ENCODE measurements at regions of chr1 and their contacts with region 1.

Region 1: DNA sequence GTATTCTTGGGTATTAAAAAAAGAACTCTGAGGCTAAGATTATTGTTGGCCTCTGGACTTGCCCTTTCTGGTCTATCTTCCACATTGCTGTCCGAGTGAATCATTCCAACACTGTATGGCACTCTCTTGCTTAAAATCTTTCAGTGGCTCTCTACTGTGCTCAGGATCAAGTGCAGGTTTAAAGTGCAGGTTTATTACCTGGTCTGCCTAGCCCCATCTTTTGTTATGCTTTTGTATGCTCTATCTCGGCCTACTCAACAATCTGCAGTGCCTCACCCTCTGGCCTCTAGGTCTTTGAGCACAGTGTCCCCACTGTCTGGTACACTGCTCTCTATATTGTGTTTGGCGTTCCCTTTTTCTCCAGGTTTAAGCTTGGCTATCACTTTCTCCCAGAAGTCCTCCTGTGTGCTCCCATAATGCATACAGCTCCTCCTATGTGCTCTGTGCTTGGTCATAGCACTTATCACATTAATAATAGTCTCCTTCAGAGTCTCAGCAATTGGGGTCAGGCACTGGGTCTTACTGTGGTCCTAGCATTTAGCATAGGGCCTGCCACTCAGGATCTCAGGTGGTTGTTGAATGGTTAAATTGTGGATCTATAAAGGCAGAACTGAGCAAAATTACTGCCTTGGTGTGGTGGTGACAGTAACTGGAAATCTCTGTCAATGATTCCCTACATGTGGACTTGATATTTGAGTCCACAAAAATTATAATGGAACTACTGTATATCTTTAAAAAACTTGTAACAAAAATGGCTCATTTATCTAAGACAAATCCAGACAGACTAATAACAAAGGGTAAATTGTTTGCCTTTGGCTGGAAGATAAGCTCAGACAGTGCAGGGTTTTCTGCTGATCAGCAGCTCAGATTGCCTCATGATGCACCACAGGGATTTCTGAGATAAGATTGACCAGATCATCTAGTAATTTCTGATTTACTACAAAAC is 10.6 kb upstream of the LDLRAD1 start:
- DNase-seq: no peak
- H3K4me3 ChIP-seq: no peak overlapping the region
- H3K27ac ChIP-seq: no peak overlapping the region
- H3K4me1 ChIP-seq: no peaks in the 10 kb centered on the region
- H3K27me3 ChIP-seq: no peaks in the 10 kb centered on the region
- CTCF ChIP-seq: no peak
- EP300 ChIP-seq: no peak
- POLR2A ChIP-seq: no peak

Region 2: GRCh38 chr1:53860967-53861411 is 167.6 kb before region 1 on chr1:
- in situ Hi-C with region 1: loop called in 1 of 4 experiments (anchors 25 kb)
- intact Hi-C with region 1: no loop called
- DNase-seq: peak; percentile 24
- H3K4me3 ChIP-seq: no peak overlapping the region
- H3K27ac ChIP-seq: no peak overlapping the region
- H3K4me1 ChIP-seq: no peaks in the 10 kb centered on the region
- H3K27me3 ChIP-seq: no peaks in the 10 kb centered on the region
- CTCF ChIP-seq: peak; percentile 45 to 74 (median 64)
- EP300 ChIP-seq: no peak
- POLR2A ChIP-seq: no peak

Region 3: GRCh38 chr1:53945433-53946251 is 82.9 kb before region 1 on chr1 and contains the start of gene IFT25:
- in situ Hi-C with region 1: loop called in 1 of 4 experiments (anchors 25 kb)
- intact Hi-C with region 1: no loop called
- DNase-seq: peak; percentile 99
- H3K4me3 ChIP-seq: peak within 1 kb of the TSS; percentile 61 to 95 (median 77)
- H3K27ac ChIP-seq: peak within 1 kb of the TSS; percentile 87 to 94 (median 92)
- H3K4me1 ChIP-seq: peaks cover 10 to 39% (median 19%) of the 10 kb centered on the region in 4 donors
- H3K27me3 ChIP-seq: no peaks in the 10 kb centered on the region
- CTCF ChIP-seq: no peak
- EP300 ChIP-seq: no peak
- POLR2A ChIP-seq: peak; percentile 66
- total RNA-seq, gene IFT25: 4.2 to 22.5 (median 12.9) TPM

Measured in transverse colon (tissue), 4 donors.